Activated CD4-positive, alpha-beta memory T cell treated with anti-CD3 and anti-CD28 coated beads for 36 hours (primary cell): ENCODE measurements at regions of chr17 and their contacts with region 1.

Region 1: DNA sequence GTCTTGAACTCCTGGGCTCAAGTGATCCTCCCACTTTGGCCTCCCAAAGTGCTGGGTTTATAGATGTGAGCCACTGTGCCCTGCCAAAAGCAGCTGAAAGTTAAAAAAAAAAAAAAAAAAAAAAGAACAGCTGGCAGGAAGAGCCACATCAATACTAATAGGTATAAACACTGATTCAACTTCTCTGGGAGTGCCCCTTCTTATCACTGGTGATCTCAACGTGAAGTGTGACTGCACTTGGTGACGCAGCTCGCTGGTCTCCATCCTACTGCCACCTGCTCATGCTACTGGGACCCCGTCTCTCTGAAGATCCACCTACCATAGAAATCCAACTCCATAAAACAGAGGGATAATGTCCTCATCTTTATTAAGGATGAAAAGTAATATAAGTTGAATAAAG is 40.8 kb downstream of the RNF157 start:
- DNase-seq: peak; percentile 83
- H3K4me3 Mint-ChIP-seq: peak overlapping the region; percentile 22
- H3K27ac Mint-ChIP-seq: peak overlapping the region; percentile 88
- H3K4me1 Mint-ChIP-seq: peaks cover 52% of the 10 kb centered on the region
- H3K27me3 Mint-ChIP-seq: no peaks in the 10 kb centered on the region

Region 2: DNA sequence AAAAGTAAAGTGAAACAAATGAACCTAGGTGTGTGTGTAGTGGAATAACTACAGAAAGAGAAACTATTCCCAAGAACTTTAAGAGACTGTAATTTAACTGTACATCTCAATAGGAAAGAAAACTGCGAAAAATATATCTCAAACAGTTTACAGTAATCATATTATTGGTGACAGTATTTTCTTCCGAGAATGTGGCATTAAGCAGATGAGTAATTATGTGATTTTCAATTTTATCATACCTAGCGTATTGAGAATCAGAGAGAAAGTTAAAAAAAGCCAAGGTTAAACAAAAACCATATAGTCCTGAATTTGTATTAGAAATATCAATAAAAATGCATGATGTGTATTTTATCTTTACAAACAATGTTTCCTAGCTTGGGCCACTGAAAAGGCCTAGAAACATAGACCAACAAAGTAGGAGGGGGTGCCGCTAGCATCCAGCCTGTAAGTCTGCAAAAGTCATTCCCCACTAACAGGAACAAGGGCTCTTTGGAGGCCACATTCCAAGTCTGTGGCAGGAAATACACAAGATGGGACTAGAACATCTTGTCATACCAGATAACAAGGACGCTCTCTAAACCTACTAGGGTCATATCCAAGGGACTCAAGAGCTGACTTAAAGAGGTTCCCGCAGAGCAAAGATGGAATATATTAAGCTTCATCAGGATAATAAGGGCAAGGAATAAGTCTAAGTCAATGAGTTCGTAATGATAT is 20.4 kb after region 1 on chr17:
- CTCF ChIA-PET with region 1: interaction called, 4 read pairs
- POLR2A ChIA-PET with region 1: no interaction called
- intact Hi-C with region 1: loop called (anchors 2 kb)
- DNase-seq: no peak
- H3K4me3 Mint-ChIP-seq: no peak overlapping the region
- H3K27ac Mint-ChIP-seq: peak overlapping the region; percentile 68
- H3K4me1 Mint-ChIP-seq: peaks cover 31% of the 10 kb centered on the region
- H3K27me3 Mint-ChIP-seq: no peaks in the 10 kb centered on the region

Region 3: GRCh38 chr17:76246080-76247066 is 46.9 kb after region 1 on chr17:
- CTCF ChIA-PET with region 1: interaction called, 3 read pairs
- POLR2A ChIA-PET with region 1: interaction called, 6 read pairs
- intact Hi-C with region 1: loop called (anchors 1 kb)
- DNase-seq: peak; percentile 88
- H3K4me3 Mint-ChIP-seq: peak overlapping the region; percentile 52
- H3K27ac Mint-ChIP-seq: peak overlapping the region; percentile 90
- H3K4me1 Mint-ChIP-seq: peaks cover 49% of the 10 kb centered on the region
- H3K27me3 Mint-ChIP-seq: no peaks in the 10 kb centered on the region